ENCODE measurements at regions of chr9 and their contacts with region 1.

Region 1: DNA sequence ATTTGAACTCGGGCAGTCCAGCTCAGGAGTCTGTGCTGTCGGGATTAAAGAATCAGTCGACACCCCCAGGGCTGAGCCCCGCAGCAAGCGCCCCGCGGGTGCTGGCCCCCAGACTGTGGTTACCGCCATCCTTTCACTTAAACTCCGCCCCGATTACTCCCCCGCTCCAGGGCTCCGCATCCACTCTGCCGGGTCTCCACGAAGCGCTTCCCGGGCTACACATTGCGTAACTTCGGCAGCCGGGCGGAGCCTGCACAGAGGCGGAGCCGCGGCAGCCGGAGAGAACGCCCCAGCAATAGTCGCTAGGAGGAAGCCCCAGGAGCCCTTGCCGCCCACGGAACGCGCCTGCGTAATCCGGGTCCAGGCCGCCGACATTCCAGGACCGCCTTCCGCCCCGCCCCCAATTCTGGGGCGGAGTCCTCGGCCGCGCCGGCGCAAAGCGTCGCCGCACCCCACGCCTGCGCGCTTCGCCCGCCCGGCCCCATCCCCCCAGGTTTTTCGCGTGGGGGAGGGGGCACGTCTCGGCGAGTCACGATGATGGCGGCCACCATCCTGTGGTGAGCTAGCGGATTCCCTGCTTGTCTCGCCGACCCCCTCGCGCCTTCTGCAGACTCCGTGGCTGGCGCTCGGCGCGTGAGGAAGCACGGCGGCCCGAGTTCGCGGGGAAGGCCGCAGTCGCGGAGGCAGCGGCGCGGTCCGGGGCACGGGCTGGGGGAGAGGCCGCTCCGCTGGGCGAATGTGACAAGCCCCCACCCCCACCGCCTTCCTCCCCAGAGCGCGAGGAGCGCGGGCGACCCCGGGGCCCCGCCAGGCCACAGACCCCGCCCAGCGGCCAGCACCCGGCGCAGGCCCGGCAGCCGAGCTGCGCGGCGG is at the start of gene RAD23B:
- DNase-seq: peak; percentile 97
- H3K4me3 Mint-ChIP-seq: peak within 1 kb of the TSS; percentile 96
- H3K27ac Mint-ChIP-seq: peak within 1 kb of the TSS; percentile 95
- H3K4me1 Mint-ChIP-seq: peaks cover 54% of the 10 kb centered on the region
- H3K27me3 Mint-ChIP-seq: no peaks in the 10 kb centered on the region
- total RNA-seq, gene RAD23B: 138 and 153 TPM in 2 replicates

Region 2: GRCh38 chr9:107213561-107214028 is 69.4 kb before region 1 on chr9:
- intact Hi-C with region 1: loop called (anchors 1 kb)
- DNase-seq: peak; percentile 16
- H3K4me3 Mint-ChIP-seq: no peak overlapping the region
- H3K27ac Mint-ChIP-seq: peak overlapping the region; percentile 9
- H3K4me1 Mint-ChIP-seq: peaks cover 14% of the 10 kb centered on the region
- H3K27me3 Mint-ChIP-seq: peaks cover 3% of the 10 kb centered on the region

Region 3: GRCh38 chr9:107299437-107299836 is 16.4 kb after region 1 on chr9:
- intact Hi-C with region 1: loop called (anchors 1 kb)
- DNase-seq: no peak
- H3K4me3 Mint-ChIP-seq: no peak overlapping the region
- H3K27ac Mint-ChIP-seq: no peak overlapping the region
- H3K4me1 Mint-ChIP-seq: peaks cover 31% of the 10 kb centered on the region
- H3K27me3 Mint-ChIP-seq: no peaks in the 10 kb centered on the region

Region 4: GRCh38 chr9:107340920-107341632 is 58.1 kb after region 1 on chr9:
- intact Hi-C with region 1: loop called (anchors 1 kb)
- DNase-seq: peak; percentile 65
- H3K4me3 Mint-ChIP-seq: no peak overlapping the region
- H3K27ac Mint-ChIP-seq: no peak overlapping the region
- H3K4me1 Mint-ChIP-seq: peaks cover 10% of the 10 kb centered on the region
- H3K27me3 Mint-ChIP-seq: no peaks in the 10 kb centered on the region

Region 5: DNA sequence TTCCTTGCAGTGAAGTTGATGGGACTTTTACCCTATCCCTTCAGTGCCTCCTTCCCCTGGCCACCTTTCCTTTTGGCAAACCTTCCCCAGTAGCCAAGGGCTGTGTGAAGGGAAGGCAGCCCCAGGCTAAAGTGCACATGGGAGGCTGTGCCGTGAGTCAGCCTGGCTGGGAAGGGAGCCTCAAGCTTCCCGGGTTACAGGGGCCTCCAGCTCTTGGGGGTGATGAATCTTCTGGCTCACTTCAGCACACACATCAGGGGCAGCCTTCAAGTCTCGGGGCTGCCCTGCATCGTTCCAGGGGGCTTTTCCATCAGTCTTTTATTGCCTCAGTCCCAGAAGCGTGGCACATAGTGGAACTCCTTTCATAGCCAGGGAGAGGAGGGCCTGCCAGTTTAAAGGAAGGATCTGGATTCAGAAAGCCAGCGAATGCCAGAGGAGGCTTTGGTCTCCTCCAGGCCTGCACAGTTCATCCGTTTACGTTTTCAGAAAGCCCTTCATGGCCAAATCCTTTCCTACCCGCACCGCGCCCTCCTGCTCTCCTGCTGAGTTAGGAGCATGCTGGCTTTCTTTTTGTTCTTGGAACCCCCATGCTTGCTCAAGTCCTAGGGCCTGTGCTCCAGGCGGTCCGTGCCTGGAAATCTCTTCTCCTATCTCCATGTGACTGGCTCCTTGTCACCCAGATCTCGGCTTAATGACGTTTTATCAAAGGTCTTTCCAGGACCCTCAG is 341.4 kb after region 1 on chr9:
- intact Hi-C with region 1: no loop called
- DNase-seq: no peak
- H3K4me3 Mint-ChIP-seq: no peak overlapping the region
- H3K27ac Mint-ChIP-seq: no peak overlapping the region
- H3K4me1 Mint-ChIP-seq: no peaks in the 10 kb centered on the region
- H3K27me3 Mint-ChIP-seq: peaks cover 2% of the 10 kb centered on the region

Region 6: DNA sequence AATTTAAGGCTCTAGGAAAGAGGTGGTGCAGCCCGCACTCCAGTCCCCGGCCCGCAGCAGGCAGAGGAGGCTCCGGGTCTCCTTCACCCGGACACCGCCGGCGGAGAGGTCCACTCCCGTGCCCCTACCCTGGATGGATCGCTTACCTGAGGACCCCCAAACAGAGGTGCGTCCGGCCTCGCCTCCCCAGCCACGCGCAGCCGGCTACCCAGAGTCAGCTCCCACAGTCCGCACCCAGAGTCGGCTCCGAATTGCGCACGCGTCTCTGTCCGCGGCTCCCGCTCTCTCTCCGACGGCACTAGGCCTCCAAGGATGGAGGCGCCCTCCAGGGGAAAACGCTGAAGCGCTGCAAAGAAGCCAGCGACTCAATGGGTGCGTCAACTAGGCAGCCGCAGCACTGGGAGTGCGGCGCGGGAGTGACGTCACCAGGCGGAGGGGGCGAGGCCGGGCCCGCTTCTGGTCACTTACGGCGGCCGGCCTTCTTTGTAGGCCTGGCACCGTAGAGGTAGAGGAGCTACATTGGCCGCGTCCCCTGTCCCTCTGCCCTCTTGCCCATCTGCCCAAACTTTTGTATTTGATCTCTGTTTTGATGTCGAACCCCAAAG is 1650.8 kb after region 1 on chr9 and contains the start of gene ELP1:
- intact Hi-C with region 1: loop called (anchors 1 kb)
- DNase-seq: peak; percentile 90
- H3K4me3 Mint-ChIP-seq: peak within 1 kb of the TSS; percentile 95
- H3K27ac Mint-ChIP-seq: peak within 1 kb of the TSS; percentile 95
- H3K4me1 Mint-ChIP-seq: peaks cover 23% of the 10 kb centered on the region
- H3K27me3 Mint-ChIP-seq: no peaks in the 10 kb centered on the region
- total RNA-seq, gene ELP1: 31.6 and 35.2 TPM in 2 replicates

Measured in activated T-helper 1 cell treated with anti-CD3 and anti-CD28 coated beads, Interleukin-12 subunit alpha, Interleukin-12 subunit beta, Interleukin-2, Interleukin-4 antibody, amounts not matched to agents 30 ng/mL and 10 ng/mL and 1 ng/mL, durations not matched to agents 14 hours and 24 hours and 36 hours (primary cell).